ENCODE measurements at regions of chr6 and their contacts with region 1.

Region 1: DNA sequence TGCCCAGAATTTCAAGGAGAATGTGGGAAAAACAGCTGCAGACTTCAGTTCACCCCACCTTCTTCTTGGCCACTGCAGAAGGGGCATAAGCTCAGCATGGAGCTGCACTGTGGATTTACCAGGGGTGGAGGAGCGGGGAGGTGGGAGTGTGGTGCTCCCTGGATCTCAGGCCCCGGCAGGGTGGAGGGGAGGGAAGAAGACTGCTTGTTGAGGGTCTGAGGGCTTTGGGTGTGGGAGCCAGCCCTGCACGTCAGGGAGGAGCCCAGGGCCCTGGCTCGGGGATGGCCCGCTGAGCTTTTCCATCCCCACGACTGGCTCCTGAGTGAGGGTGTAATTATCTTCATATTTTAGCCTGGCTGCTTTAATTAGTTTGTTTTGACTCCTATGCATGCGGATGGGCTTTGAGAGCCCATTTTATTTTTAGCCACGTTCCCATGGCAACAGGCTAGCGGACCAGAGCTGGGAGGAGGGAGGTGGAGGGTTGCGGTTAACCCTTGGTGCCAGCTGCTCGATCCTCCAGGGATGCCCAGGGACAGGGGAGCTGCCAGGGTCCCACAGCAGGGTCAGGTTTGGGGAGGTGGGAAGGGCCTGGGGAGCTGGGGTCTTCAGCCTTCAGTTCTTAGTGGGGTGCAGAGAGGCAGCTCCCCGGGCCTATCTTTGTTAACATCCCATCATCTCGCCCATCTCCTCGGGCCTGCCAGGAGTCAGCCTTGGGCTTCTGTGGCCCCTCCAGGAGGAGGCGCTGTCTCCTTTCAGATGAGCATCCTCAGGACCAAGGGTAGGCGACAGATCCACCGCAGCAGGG is 68.2 kb downstream of the RAB44 start:
- DNase-seq: peak; percentile 74
- H3K4me3 Mint-ChIP-seq: no peak overlapping the region
- H3K27ac Mint-ChIP-seq: peak overlapping the region; percentile 0
- H3K4me1 Mint-ChIP-seq: peaks cover 30% of the 10 kb centered on the region
- H3K27me3 Mint-ChIP-seq: no peaks in the 10 kb centered on the region

Region 2: DNA sequence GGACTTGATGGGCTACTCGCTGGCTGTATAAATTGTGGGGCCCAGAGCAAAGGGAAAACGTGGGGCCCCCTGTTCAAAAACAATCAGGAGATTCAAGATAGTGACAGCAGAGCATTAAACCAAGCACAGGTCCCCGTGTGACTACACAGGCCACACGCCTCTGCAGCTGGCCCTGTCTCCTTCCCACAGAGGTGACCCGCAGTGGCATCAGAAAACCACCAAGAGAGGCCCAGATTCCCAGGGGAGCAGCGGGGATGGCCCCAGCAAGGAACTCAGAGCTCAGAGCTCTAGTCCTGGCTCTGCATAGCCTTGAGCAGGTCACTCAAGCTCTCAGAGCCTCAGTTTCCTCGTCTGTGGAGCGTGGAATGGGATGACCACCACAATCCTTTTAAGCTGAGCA is 15.9 kb after region 1 on chr6:
- intact Hi-C with region 1: loop called (anchors 1 kb)
- DNase-seq: no peak
- H3K4me3 Mint-ChIP-seq: no peak overlapping the region
- H3K27ac Mint-ChIP-seq: no peak overlapping the region
- H3K4me1 Mint-ChIP-seq: peaks cover 4% of the 10 kb centered on the region
- H3K27me3 Mint-ChIP-seq: peaks cover 9% of the 10 kb centered on the region

Region 3: GRCh38 chr6:36851149-36851614 is 85.4 kb after region 1 on chr6:
- intact Hi-C with region 1: loop called (anchors 1 kb)
- DNase-seq: no peak
- H3K4me3 Mint-ChIP-seq: no peak overlapping the region
- H3K27ac Mint-ChIP-seq: no peak overlapping the region
- H3K4me1 Mint-ChIP-seq: peaks cover 4% of the 10 kb centered on the region
- H3K27me3 Mint-ChIP-seq: no peaks in the 10 kb centered on the region

Region 4: GRCh38 chr6:36874443-36875249 is 108.8 kb after region 1 on chr6 and contains the start of gene PPIL1:
- intact Hi-C with region 1: loop called (anchors 5 kb)
- DNase-seq: peak; percentile 80
- H3K4me3 Mint-ChIP-seq: peak within 1 kb of the TSS; percentile 99
- H3K27ac Mint-ChIP-seq: peak within 1 kb of the TSS; percentile 100
- H3K4me1 Mint-ChIP-seq: peaks cover 48% of the 10 kb centered on the region
- H3K27me3 Mint-ChIP-seq: peaks cover 3% of the 10 kb centered on the region
- total RNA-seq, gene PPIL1: 52.4 and 54.8 TPM in 2 replicates

Measured in activated T-helper 2 cell treated with anti-CD3 and anti-CD28 coated beads, Interferon-gamma antibody, Interleukin-2, Interleukin-4, amounts not matched to agents 10 μg/mL and 5 μg/mL and 100 μg/mL, durations not matched to agents 14 hours and 24 hours and 36 hours (primary cell).